A673 (cell line): ENCODE measurements at regions of chr3 and their contacts with region 1.

Region 1: DNA sequence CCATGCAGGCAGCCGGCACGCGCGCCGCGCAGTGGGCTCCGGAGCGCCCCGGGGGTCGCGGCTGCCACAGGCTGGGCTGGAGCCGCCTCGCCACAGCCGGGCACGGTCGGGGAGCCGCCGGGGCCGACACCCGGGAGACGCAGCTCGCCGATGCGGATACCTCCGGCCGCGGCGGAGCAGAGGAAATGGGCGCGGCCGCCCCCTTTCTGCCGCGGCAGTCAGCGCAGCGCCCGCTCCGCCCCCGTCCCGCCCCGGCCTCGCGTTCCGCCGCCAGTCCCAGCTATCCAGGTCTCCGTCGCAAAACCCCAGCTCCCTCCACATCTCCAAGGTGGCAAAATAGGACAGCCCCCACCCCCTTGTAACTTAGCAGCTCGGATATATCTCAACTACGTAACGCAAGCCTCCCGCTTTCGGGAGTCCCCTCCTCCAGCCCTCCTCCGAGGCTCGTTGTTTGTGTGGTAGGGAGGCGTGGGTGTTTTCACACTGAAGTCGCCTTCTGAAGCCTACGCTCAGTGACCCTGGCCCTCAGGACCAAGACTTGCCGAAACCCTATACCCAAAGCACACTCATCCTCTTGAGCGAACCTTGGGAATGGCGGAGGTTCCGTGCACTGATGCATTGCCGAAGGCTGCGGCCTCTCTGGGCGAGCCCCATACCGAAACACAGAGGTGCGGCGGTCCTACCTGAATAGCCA is at the start of gene SH3BP5:
- DNase-seq: peak; percentile 85
- H3K4me3 ChIP-seq: peak within 1 kb of the TSS; percentile 89
- H3K27ac ChIP-seq: peak within 1 kb of the TSS; percentile 44
- H3K4me1 ChIP-seq: peaks cover 44% of the 10 kb centered on the region
- H3K27me3 ChIP-seq: no peaks in the 10 kb centered on the region
- CTCF ChIP-seq: peak; percentile 58
- total RNA-seq, gene SH3BP5: 20.3 and 22.5 TPM in 2 replicates

Region 2: GRCh38 chr3:15321349-15321748 is 11.2 kb before region 1 on chr3:
- CTCF ChIA-PET with region 1: no interaction called
- POLR2A ChIA-PET with region 1: interaction called, 11 read pairs
- intact Hi-C with region 1: no loop called
- DNase-seq: no peak
- H3K4me3 ChIP-seq: no peak overlapping the region
- H3K27ac ChIP-seq: no peak overlapping the region
- H3K4me1 ChIP-seq: peaks cover 41% of the 10 kb centered on the region
- H3K27me3 ChIP-seq: no peaks in the 10 kb centered on the region
- CTCF ChIP-seq: no peak

Region 3: GRCh38 chr3:15377961-15378791 is 45.6 kb after region 1 on chr3:
- CTCF ChIA-PET with region 1: no interaction called
- POLR2A ChIA-PET with region 1: interaction called, 3 read pairs
- intact Hi-C with region 1: loop called (anchors 5 kb)
- DNase-seq: peak; percentile 96
- H3K4me3 ChIP-seq: no peak overlapping the region
- H3K27ac ChIP-seq: peak overlapping the region; percentile 62
- H3K4me1 ChIP-seq: peaks cover 3% of the 10 kb centered on the region
- H3K27me3 ChIP-seq: no peaks in the 10 kb centered on the region
- CTCF ChIP-seq: peak; percentile 85